Activated T-helper 1 cell treated with anti-CD3 and anti-CD28 coated beads, Interleukin-12 subunit alpha, Interleukin-12 subunit beta, Interleukin-2, Interleukin-4 antibody, amounts not matched to agents 30 ng/mL and 10 ng/mL and 1 ng/mL, durations not matched to agents 14 hours and 24 hours and 36 hours (primary cell): ENCODE measurements at regions of chr5 and their contacts with region 1.

Region 1: GRCh38 chr5:154754460-154755360 is 467 bp upstream of the LARP1 start:
- DNase-seq: peak; percentile 98
- H3K4me3 Mint-ChIP-seq: peak overlapping the region; percentile 89
- H3K27ac Mint-ChIP-seq: peak overlapping the region; percentile 97
- H3K4me1 Mint-ChIP-seq: peaks cover 39% of the 10 kb centered on the region
- H3K27me3 Mint-ChIP-seq: peaks cover 1% of the 10 kb centered on the region

Region 2: DNA sequence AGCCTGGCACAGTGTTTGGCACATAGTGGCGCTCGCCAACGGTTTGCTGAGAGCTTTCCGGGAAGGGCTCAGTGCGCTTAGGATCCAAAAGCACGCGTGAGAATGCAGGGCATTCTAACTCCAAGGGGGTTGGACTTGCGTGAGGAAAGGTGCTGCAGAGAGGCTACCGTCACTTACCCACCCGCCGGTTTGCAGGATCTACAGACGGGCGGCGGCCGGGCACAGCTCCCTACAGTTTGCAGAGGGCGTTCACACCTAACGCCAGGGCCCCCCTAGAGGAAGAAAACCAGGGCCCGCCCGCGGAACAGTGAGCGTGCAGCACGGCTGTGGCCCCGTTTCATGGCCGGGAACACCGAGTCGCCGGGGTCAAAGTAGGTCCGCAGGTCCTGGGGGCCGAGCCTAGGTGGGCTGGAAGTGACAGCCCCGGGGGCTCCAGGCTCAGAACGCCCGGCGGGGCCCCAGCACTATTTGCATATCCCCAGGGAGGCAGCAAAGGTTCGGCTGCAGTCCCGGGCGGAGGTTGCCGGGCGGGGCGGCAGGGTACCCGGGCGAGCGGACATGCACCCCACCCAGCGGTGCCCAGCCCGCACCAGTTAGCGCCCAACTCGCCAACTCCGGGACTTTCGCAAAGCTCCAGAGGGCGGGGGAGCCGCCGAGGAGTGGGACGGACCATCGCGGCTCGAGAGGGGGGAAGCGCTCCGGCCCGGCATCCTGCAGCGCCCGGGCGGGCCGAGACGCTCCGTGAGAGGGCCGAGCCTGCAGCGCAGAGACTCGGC is 564.7 kb before region 1 on chr5:
- intact Hi-C with region 1: loop called (anchors 10 kb)
- DNase-seq: peak; percentile 77
- H3K4me3 Mint-ChIP-seq: peak overlapping the region; percentile 87
- H3K27ac Mint-ChIP-seq: peak overlapping the region; percentile 85
- H3K4me1 Mint-ChIP-seq: peaks cover 54% of the 10 kb centered on the region
- H3K27me3 Mint-ChIP-seq: peaks cover 3% of the 10 kb centered on the region

Region 3: GRCh38 chr5:154487541-154487940 is 267.2 kb before region 1 on chr5:
- intact Hi-C with region 1: loop called (anchors 5 kb)
- DNase-seq: no peak
- H3K4me3 Mint-ChIP-seq: no peak overlapping the region
- H3K27ac Mint-ChIP-seq: no peak overlapping the region
- H3K4me1 Mint-ChIP-seq: peaks cover 15% of the 10 kb centered on the region
- H3K27me3 Mint-ChIP-seq: peaks cover 78% of the 10 kb centered on the region

Region 4: GRCh38 chr5:154683101-154683880 is 71.4 kb before region 1 on chr5:
- intact Hi-C with region 1: loop called (anchors 2 kb)
- DNase-seq: no peak
- H3K4me3 Mint-ChIP-seq: peak overlapping the region; percentile 29
- H3K27ac Mint-ChIP-seq: no peak overlapping the region
- H3K4me1 Mint-ChIP-seq: peaks cover 6% of the 10 kb centered on the region
- H3K27me3 Mint-ChIP-seq: peaks cover 30% of the 10 kb centered on the region

Region 5: GRCh38 chr5:154783774-154784460 is 29.2 kb after region 1 on chr5:
- intact Hi-C with region 1: loop called (anchors 2 kb)
- DNase-seq: no peak
- H3K4me3 Mint-ChIP-seq: no peak overlapping the region
- H3K27ac Mint-ChIP-seq: no peak overlapping the region
- H3K4me1 Mint-ChIP-seq: peaks cover 72% of the 10 kb centered on the region
- H3K27me3 Mint-ChIP-seq: no peaks in the 10 kb centered on the region

Region 6: DNA sequence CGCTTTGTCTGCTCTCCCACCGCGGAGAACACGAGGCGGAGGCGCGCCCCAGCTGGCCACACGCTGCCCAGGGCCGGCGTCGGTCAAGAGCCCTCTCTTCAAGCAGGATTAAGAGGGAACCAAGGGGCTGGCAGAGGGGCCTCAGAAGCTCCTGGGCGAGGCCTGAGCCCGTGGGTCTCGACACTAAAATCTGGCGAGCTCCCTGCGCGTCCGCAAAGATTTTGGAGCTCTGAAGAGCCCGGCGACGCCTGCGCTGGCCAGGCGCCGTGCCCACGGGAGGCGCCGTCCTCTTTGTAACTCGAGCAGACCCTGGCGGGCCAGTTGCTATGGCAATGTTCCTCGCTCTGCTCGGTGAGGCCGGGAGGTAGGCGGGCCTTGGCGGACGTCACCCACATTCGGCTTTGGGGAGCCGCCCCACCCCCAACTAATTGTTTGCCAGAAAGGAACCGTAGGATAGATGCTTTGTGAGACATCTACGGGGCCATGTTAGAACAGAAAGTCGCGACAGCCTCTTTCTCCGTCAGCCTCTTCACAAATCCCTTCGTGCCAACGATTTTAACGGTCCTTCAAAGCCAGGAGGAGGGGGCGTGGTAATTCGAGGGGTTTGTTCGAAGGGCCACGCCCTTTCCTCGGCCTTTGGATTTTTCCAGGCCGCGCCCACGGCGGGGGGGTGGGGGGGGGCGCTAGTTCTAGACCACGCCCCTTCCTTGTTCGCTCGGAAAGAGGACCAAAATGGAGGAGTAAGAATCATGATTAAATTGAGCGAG is 103.0 kb after region 1 on chr5:
- intact Hi-C with region 1: loop called (anchors 1 kb)
- DNase-seq: peak; percentile 81
- H3K4me3 Mint-ChIP-seq: peak overlapping the region; percentile 99
- H3K27ac Mint-ChIP-seq: peak overlapping the region; percentile 100
- H3K4me1 Mint-ChIP-seq: peaks cover 41% of the 10 kb centered on the region
- H3K27me3 Mint-ChIP-seq: no peaks in the 10 kb centered on the region